Gastrocnemius medialis (tissue), 4 donors: ENCODE measurements at regions of chr1 and their contacts with region 1.

Region 1: DNA sequence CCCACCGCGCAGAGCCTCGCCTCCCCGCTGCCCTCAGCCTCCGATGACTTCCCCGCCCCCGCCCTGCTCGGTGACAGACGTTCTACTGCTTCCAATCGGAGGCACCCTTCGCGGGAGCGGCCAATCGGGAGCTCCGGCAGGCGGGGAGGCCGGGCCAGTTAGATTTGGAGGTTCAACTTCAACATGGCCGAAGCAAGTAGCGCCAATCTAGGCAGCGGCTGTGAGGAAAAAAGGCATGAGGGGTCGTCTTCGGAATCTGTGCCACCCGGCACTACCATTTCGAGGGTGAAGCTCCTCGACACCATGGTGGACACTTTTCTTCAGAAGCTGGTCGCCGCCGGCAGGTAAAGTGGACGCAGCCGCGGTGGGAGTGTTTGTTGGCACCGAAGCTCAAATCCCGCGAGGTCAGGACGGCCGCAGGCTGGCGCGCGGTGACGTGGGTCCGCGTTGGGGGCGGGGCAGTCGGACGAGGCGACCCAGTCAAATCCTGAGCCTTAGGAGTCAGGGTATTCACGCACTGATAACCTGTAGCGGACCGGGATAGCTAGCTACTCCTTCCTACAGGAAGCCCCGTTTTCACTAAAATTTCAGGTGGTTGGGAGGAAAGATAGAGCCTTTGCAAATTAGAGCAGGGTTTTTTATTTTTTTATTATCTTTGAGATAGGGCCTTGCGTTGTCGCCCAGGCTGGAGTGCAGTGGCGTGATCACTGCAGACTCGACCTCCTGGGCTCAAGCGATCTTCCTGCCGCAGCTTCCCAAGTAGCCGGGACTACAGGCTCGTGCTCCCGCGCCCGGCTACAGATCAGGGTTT is at the start of gene PMF1:
- DNase-seq: peak; percentile 98
- ATAC-seq: peak; percentile 98 to 99
- H3K4me3 ChIP-seq: peak within 1 kb of the TSS; percentile 70 to 92 (median 74)
- H3K27ac ChIP-seq: peak within 1 kb of the TSS; percentile 91 to 99 (median 95)
- H3K4me1 ChIP-seq: peaks cover 21 to 25% of the 10 kb centered on the region in 2 donors
- H3K27me3 ChIP-seq: no peaks in the 10 kb centered on the region
- CTCF ChIP-seq: no peak
- POLR2A ChIP-seq: peak; percentile 59 to 74
- total RNA-seq, gene PMF1: 73.3 to 119 (median 89.9) TPM

Region 2: GRCh38 chr1:155063550-155064110 is 1149.4 kb before region 1 on chr1 and contains the start of gene EFNA4:
- in situ Hi-C with region 1: no loop called
- intact Hi-C with region 1: no loop called
- DNase-seq: peak; percentile 69 to 72
- ATAC-seq: peak; percentile 91 to 93
- H3K4me3 ChIP-seq: peak within 1 kb of the TSS; percentile 60 to 91 (median 78)
- H3K27ac ChIP-seq: peak within 1 kb of the TSS; percentile 69 to 80 (median 75)
- H3K4me1 ChIP-seq: peaks cover 9 to 18% of the 10 kb centered on the region in 2 donors
- H3K27me3 ChIP-seq: no peaks in the 10 kb centered on the region
- CTCF ChIP-seq: no peak
- POLR2A ChIP-seq: peak in 1 of 2 donors; percentile 28
- total RNA-seq, gene EFNA4: 0.41 to 0.87 (median 0.80) TPM

Region 3: DNA sequence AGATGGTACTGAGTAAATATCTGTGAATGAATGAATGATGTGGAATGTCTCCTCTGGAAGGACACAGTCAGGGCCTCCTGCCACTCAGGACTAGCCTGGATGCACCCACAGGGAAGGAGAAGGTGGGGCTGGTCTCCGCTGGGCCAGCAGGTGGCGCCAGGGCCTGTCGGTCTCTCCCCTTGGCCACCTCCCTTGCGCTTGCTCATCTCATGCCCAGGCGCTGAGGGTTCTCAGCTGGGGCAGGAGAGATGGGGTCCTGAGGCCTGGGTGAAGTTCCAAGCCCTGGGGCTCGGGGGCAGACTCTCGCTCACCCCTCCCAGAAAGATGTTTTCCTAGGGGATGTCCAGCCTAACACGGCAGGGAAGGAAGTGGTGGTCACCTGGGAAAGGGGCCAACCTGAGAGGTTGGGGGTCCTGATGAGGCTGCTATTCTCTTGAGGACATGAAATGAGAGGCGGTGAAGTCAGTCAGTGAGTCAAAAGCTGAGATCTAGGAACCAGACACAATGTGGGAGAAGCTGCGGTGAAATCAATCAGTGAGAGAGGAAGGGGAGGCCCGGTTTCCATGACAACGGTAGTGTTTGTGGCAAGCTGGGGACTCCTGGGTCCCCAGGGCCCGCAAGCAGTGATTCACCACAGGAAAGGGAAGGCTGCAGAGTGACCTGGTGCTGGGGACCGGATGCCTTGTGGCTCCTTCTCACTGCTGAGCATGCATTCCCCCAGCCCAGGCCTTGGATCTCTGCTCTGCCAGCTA is 116.2 kb before region 1 on chr1:
- in situ Hi-C with region 1: no loop called
- intact Hi-C with region 1: loop called (anchors 5 kb)
- DNase-seq: peak; percentile 85 to 90
- ATAC-seq: peak; percentile 96 to 98
- H3K4me3 ChIP-seq: no peak overlapping the region
- H3K27ac ChIP-seq: peak overlapping the region; percentile 50 to 80 (median 74)
- H3K4me1 ChIP-seq: peaks cover 7 to 23% of the 10 kb centered on the region in 2 donors
- H3K27me3 ChIP-seq: no peaks in the 10 kb centered on the region
- CTCF ChIP-seq: peak; percentile 97 to 98 (median 98)
- POLR2A ChIP-seq: no peak

Region 4: DNA sequence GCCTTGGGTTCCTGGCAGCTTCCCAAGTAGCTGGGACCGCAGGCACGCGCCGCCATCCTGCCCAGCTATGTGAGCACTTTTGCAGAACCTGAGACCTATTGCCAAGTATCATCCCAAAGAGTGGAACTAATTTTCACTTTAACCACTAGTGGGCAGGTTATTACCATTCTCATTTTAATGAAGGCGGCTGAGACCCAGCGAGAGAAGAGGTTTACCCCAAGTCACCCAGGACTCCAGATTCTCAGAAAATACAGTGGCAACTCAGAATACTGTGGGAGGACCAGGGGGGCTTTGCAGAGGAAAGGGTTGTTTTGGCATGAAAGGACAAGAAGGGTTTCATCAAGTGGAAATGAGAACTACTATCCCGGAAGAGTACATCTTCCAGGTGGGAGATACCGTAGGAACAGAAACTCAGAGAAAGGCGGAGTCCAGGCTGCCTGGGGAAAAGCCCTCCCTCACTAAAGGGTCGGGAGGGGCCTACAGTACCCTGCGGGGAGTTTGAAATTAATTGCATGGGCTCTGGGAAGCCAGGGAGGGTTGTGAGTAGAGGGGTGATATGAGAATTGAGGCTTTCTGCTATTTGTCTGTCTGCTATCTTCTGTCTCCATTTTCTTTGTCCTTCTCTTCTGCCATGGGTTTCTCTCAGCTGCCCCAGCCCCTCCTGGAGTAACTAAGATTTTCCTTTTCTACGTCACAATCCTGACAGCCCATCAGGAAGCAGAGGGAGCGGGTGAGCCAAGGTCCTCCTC is 66.8 kb before region 1 on chr1:
- in situ Hi-C with region 1: no loop called
- intact Hi-C with region 1: loop called (anchors 5 kb)
- DNase-seq: peak in 1 of 2 donors; percentile 55
- ATAC-seq: peak; percentile 61 to 66
- H3K4me3 ChIP-seq: peak overlapping the region in 1 of 4 donors; percentile 6
- H3K27ac ChIP-seq: no peak overlapping the region
- H3K4me1 ChIP-seq: peaks cover 10 to 11% of the 10 kb centered on the region in 2 donors
- H3K27me3 ChIP-seq: peaks cover 8 to 21% (median 17%) of the 10 kb centered on the region in 3 donors
- CTCF ChIP-seq: peak; percentile 58 to 72 (median 67)
- POLR2A ChIP-seq: no peak

Region 5: DNA sequence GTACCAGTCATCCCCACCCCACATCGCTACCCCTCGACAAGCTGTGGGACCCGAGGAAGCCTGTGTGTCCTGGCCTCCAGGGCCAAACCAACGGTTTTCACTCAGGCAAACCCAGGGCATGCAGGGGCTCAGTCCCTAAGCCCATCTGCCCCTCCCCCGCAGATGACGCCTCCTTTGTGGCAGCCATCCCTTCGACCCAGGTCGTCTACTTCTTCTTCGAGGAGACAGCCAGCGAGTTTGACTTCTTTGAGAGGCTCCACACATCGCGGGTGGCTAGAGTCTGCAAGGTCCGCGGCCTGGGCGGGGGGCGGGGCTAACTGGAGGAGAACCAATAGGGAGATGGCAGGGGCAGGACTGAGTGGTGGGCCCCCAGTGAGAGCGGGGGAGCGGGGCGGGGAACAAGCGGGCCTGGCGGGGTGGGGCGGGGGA is 52.3 kb before region 1 on chr1:
- in situ Hi-C with region 1: no loop called
- intact Hi-C with region 1: loop called (anchors 2 kb)
- DNase-seq: peak; percentile 84 to 91
- ATAC-seq: peak; percentile 85 to 86
- H3K4me3 ChIP-seq: peak overlapping the region; percentile 56 to 80 (median 62)
- H3K27ac ChIP-seq: peak overlapping the region; percentile 93 to 97 (median 94)
- H3K4me1 ChIP-seq: peaks cover 10 to 18% of the 10 kb centered on the region in 2 donors
- H3K27me3 ChIP-seq: no peaks in the 10 kb centered on the region
- CTCF ChIP-seq: no peak
- POLR2A ChIP-seq: peak; percentile 28 to 45

Region 6: GRCh38 chr1:156193488-156194299 is 19.3 kb before region 1 on chr1 and contains the start of gene SLC25A44:
- in situ Hi-C with region 1: no loop called
- intact Hi-C with region 1: loop called (anchors 2 kb)
- DNase-seq: peak; percentile 96 to 97
- ATAC-seq: peak; percentile 99 to 100
- H3K4me3 ChIP-seq: peak within 1 kb of the TSS; percentile 81 to 95 (median 88)
- H3K27ac ChIP-seq: peak within 1 kb of the TSS; percentile 81 to 90 (median 86)
- H3K4me1 ChIP-seq: peaks cover 31 to 39% of the 10 kb centered on the region in 2 donors
- H3K27me3 ChIP-seq: no peaks in the 10 kb centered on the region
- CTCF ChIP-seq: peak; percentile 12 to 69 (median 59)
- POLR2A ChIP-seq: peak; percentile 73 to 78
- total RNA-seq, gene SLC25A44: 9.2 to 19.5 (median 18.5) TPM

Region 7: DNA sequence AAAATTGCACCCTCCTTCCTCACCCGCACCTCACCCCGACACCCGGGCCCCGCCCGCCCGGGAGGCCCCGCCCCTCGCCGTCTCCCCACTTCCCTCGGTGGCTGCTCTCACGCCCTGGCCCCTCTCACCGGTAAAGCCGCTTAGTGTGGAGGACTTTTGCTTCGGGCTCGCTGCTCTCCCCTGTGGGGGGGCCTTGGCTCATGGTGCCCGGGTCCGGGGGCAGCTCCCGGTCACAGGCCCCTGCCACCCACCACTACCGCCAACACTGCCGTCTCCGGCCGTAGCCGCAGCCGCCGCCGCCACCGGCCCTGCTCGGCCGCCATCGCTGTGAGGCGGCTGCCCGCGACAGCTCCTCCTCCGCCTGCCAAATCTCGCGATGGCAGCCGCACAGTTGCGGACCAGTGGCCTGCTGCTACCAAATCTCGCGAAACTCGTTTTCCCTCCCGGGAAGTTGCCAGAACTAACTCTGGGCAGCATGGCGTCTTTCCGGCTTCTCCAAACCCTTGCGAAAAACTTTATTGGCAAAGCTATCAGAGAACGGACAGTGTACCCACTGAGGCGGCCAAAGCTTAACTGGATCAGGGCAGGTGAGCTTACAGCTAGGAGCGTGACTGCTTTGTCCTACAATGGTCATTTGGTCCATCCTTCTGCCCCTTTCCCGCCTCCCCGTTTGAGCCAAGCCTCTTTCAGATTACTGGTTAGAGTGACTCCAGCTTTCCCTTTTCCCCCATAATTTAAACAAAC is 69.6 kb after region 1 on chr1 and contains the start of gene SMG5:
- in situ Hi-C with region 1: no loop called
- intact Hi-C with region 1: loop called (anchors 2 kb)
- DNase-seq: peak; percentile 97
- ATAC-seq: peak; percentile 87 to 90
- H3K4me3 ChIP-seq: peak within 1 kb of the TSS; percentile 72 to 97 (median 82)
- H3K27ac ChIP-seq: peak within 1 kb of the TSS; percentile 90 to 99 (median 94)
- H3K4me1 ChIP-seq: peaks cover 27 to 33% of the 10 kb centered on the region in 2 donors
- H3K27me3 ChIP-seq: no peaks in the 10 kb centered on the region
- CTCF ChIP-seq: no peak
- POLR2A ChIP-seq: peak; percentile 91 to 95
- total RNA-seq, gene SMG5: 47.4 to 83.1 (median 62.7) TPM